Left ventricle myocardium superior (tissue), 1 donor: ENCODE measurements at regions of chr7 and their contacts with region 1.

Region 1: GRCh38 chr7:96993094-96993865 is 12.1 kb upstream of the DLX6 start:
- DNase-seq: no peak
- ATAC-seq: no peak

Region 2: GRCh38 chr7:98097042-98097645 is 1103.9 kb after region 1 on chr7:
- intact Hi-C with region 1: loop called (anchors 5 kb)
- DNase-seq: no peak
- ATAC-seq: no peak